Body of pancreas (tissue), 4 donors: ENCODE measurements at regions of chr7 and their contacts with region 1.

Region 1: GRCh38 chr7:147639037-147639436 is 951.5 kb upstream of the C7orf33 start:
- DNase-seq: no peak
- ATAC-seq: no peak
- H3K4me3 ChIP-seq: no peak overlapping the region
- H3K27ac ChIP-seq: no peak overlapping the region
- H3K4me1 ChIP-seq: no peaks in the 10 kb centered on the region
- H3K27me3 ChIP-seq: no peaks in the 10 kb centered on the region
- CTCF ChIP-seq: no peak
- POLR2A ChIP-seq: no peak

Region 2: GRCh38 chr7:149573519-149573918 is 1934.5 kb after region 1 on chr7:
- intact Hi-C with region 1: loop called (anchors 10 kb)
- DNase-seq: no peak
- ATAC-seq: no peak
- H3K4me3 ChIP-seq: no peak overlapping the region
- H3K27ac ChIP-seq: no peak overlapping the region
- H3K4me1 ChIP-seq: no peaks in the 10 kb centered on the region
- H3K27me3 ChIP-seq: no peaks in the 10 kb centered on the region
- CTCF ChIP-seq: no peak
- POLR2A ChIP-seq: no peak